Posterior cingulate gyrus (tissue), 11 donors: ENCODE measurements at regions of chr7 and their contacts with region 1.

Region 1: DNA sequence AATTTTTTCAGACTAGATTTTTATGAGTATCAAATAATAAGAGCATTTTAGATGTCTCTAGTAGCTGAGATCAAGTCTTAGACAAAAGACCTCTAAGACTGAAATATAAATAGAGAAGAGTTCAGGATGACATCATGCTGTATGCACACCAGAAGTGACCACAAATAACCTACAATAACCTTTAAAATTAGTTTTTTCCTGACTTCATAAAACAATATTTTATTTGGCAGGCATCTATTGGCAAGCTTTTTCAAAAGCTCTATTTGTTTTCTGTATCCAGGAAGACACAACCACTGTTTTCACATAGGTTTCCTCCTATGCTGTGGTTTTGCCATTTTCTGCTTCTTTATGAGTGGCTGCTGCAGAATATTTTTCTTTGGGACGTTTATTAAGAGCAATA is 359.1 kb downstream of the CRPPA start:
- DNase-seq: no peak

Region 2: GRCh38 chr7:15199482-15199881 is 862.8 kb before region 1 on chr7:
- intact Hi-C with region 1: loop called (anchors 10 kb)
- DNase-seq: no peak

Region 3: GRCh38 chr7:16004702-16005101 is 57.6 kb before region 1 on chr7:
- intact Hi-C with region 1: no loop called
- DNase-seq: no peak

Region 4: DNA sequence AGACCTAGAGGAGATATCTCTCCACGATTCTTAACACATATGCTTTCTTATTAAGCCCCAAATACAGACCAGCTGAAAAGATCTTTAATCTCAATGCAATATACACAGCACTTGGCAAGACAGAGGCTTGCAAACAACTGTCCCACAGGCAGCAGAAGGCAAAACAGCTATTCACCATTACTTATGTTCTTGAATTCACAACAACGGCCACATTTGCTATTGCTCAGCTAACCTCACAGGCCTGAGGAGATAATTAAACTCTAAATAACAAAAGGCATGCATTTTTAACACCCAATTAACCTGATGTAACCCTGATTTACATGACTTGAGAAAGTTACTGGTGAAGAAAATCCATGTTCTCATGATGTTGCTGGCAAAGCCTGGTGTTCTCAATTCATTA is 142.7 kb after region 1 on chr7:
- intact Hi-C with region 1: no loop called
- DNase-seq: no peak